Activated CD4-positive, alpha-beta T cell treated with anti-CD3 and anti-CD28 coated beads for 36 hours (primary cell): ENCODE measurements at regions of chr3 and their contacts with region 1.

Region 1: GRCh38 chr3:141575879-141576743 is 89.3 kb downstream of the RASA2 start:
- DNase-seq: no peak
- ATAC-seq: peak; percentile 64
- H3K4me3 Mint-ChIP-seq: peak overlapping the region; percentile 14
- H3K27ac Mint-ChIP-seq: peak overlapping the region; percentile 70
- H3K4me1 Mint-ChIP-seq: peaks cover 12% of the 10 kb centered on the region
- H3K27me3 Mint-ChIP-seq: no peaks in the 10 kb centered on the region

Region 2: DNA sequence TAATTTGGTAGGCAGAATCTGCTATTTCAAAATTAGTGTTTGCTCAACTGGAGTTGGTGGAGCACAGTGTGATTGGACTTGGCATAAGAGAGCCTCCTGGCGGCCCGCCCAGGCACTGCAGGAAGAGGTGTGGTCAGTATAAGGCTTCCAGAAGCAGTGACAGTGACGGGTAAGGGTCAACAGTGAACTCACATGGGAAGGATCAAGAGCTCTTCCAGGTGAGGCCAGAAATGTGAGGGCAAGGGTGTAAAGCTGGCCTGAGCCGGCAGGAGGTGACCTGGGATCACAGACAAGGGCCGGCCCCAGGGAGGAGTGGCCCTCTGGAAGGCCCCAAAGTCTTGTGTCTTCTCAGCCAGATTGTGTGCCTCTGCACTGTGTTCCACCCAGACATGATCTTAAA is 68.8 kb after region 1 on chr3:
- CTCF ChIA-PET with region 1: interaction called, 7 read pairs
- POLR2A ChIA-PET with region 1: no interaction called
- intact Hi-C with region 1: loop called (anchors 2 kb)
- DNase-seq: peak; percentile 88
- ATAC-seq: peak; percentile 95
- H3K4me3 Mint-ChIP-seq: no peak overlapping the region
- H3K27ac Mint-ChIP-seq: no peak overlapping the region
- H3K4me1 Mint-ChIP-seq: no peaks in the 10 kb centered on the region
- H3K27me3 Mint-ChIP-seq: no peaks in the 10 kb centered on the region

Region 3: GRCh38 chr3:141659821-141660613 is 83.9 kb after region 1 on chr3:
- CTCF ChIA-PET with region 1: no interaction called
- POLR2A ChIA-PET with region 1: no interaction called
- intact Hi-C with region 1: no loop called
- DNase-seq: peak; percentile 21
- ATAC-seq: peak; percentile 39
- H3K4me3 Mint-ChIP-seq: peak overlapping the region; percentile 61
- H3K27ac Mint-ChIP-seq: no peak overlapping the region
- H3K4me1 Mint-ChIP-seq: peaks cover 8% of the 10 kb centered on the region
- H3K27me3 Mint-ChIP-seq: peaks cover 48% of the 10 kb centered on the region

Region 4: DNA sequence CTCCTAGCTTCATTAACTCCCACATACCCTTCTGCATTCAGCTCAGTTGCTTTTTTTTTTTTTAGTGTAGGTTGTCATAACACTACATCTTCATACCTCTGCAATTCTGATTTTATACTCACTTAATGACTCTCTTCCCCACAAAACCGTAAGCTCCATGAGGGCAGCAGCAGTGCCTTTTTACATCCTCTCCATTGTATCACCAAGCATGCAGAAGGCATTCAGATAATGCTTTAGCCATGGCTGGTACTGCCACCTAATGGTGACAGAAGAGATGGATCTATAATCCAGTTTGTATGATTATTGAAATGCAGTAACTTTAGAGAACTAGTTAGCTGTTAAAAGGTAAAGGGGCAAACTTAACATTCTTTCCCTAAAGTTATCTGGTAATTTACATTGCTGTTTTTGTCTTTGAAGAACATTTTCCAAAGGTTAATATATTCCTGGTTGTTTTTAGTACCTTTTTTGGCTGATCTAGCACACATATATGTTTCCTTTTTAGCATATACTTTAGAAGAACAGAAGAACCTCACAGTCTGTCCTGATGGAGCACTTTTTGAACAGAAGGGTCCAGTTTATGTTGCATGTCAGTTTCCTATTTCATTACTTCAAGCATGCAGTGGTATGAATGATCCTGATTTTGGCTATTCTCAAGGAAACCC is 337.2 kb after region 1 on chr3:
- CTCF ChIA-PET with region 1: interaction called, 4 read pairs
- POLR2A ChIA-PET with region 1: no interaction called
- intact Hi-C with region 1: loop called in 1 of 2 experiments (anchors 2 kb)
- DNase-seq: peak; percentile 70
- ATAC-seq: peak; percentile 93
- H3K4me3 Mint-ChIP-seq: no peak overlapping the region
- H3K27ac Mint-ChIP-seq: no peak overlapping the region
- H3K4me1 Mint-ChIP-seq: no peaks in the 10 kb centered on the region
- H3K27me3 Mint-ChIP-seq: no peaks in the 10 kb centered on the region

Region 5: DNA sequence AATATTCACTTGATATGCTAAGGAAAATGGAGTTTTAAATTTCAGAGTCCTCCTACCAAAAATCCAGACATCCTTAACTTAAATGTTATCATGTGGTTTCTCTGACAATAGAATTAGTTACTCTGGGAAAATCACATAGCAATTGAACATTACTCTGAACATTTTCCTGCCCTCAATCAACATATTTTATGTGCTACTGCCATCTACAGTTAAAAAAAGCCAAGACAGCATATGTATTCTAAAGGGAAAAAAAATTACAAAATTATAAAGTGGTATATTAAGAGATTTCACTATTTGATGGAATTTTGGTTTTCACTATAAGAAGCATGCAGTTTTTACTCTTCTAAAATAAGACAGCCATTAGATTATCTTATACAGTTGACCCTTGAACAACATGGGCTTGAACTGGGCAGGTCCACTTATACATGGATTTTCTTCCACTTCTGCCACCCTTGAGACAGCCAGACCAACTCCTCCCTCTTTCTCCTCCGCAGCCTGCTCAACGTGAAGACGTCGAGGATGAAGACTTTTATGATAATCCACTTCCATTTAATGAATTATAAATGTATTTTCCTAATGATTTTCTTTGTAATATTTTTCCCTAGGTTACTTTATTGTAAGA is 422.7 kb after region 1 on chr3:
- CTCF ChIA-PET with region 1: no interaction called
- POLR2A ChIA-PET with region 1: no interaction called
- intact Hi-C with region 1: loop called in 1 of 2 experiments (anchors 5 kb)
- DNase-seq: no peak
- ATAC-seq: no peak
- H3K4me3 Mint-ChIP-seq: no peak overlapping the region
- H3K27ac Mint-ChIP-seq: no peak overlapping the region
- H3K4me1 Mint-ChIP-seq: no peaks in the 10 kb centered on the region
- H3K27me3 Mint-ChIP-seq: no peaks in the 10 kb centered on the region

Region 6: GRCh38 chr3:142394921-142395622 is 819.0 kb after region 1 on chr3:
- CTCF ChIA-PET with region 1: no interaction called
- POLR2A ChIA-PET with region 1: no interaction called
- intact Hi-C with region 1: loop called in 1 of 2 experiments (anchors 10 kb)
- DNase-seq: no peak
- ATAC-seq: no peak
- H3K4me3 Mint-ChIP-seq: no peak overlapping the region
- H3K27ac Mint-ChIP-seq: no peak overlapping the region
- H3K4me1 Mint-ChIP-seq: no peaks in the 10 kb centered on the region
- H3K27me3 Mint-ChIP-seq: no peaks in the 10 kb centered on the region